Activated T-helper 1 cell treated with anti-CD3 and anti-CD28 coated beads, Interleukin-12 subunit alpha, Interleukin-12 subunit beta, Interleukin-2, Interleukin-4 antibody, amounts not matched to agents 30 ng/mL and 10 ng/mL and 1 ng/mL, durations not matched to agents 14 hours and 24 hours and 36 hours (primary cell): ENCODE measurements at regions of chr5 and their contacts with region 1.

Region 1: DNA sequence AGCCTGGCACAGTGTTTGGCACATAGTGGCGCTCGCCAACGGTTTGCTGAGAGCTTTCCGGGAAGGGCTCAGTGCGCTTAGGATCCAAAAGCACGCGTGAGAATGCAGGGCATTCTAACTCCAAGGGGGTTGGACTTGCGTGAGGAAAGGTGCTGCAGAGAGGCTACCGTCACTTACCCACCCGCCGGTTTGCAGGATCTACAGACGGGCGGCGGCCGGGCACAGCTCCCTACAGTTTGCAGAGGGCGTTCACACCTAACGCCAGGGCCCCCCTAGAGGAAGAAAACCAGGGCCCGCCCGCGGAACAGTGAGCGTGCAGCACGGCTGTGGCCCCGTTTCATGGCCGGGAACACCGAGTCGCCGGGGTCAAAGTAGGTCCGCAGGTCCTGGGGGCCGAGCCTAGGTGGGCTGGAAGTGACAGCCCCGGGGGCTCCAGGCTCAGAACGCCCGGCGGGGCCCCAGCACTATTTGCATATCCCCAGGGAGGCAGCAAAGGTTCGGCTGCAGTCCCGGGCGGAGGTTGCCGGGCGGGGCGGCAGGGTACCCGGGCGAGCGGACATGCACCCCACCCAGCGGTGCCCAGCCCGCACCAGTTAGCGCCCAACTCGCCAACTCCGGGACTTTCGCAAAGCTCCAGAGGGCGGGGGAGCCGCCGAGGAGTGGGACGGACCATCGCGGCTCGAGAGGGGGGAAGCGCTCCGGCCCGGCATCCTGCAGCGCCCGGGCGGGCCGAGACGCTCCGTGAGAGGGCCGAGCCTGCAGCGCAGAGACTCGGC is 526 bp upstream of the GALNT10 start:
- DNase-seq: peak; percentile 77
- H3K4me3 Mint-ChIP-seq: peak overlapping the region; percentile 87
- H3K27ac Mint-ChIP-seq: peak overlapping the region; percentile 85
- H3K4me1 Mint-ChIP-seq: peaks cover 54% of the 10 kb centered on the region
- H3K27me3 Mint-ChIP-seq: peaks cover 3% of the 10 kb centered on the region

Region 2: DNA sequence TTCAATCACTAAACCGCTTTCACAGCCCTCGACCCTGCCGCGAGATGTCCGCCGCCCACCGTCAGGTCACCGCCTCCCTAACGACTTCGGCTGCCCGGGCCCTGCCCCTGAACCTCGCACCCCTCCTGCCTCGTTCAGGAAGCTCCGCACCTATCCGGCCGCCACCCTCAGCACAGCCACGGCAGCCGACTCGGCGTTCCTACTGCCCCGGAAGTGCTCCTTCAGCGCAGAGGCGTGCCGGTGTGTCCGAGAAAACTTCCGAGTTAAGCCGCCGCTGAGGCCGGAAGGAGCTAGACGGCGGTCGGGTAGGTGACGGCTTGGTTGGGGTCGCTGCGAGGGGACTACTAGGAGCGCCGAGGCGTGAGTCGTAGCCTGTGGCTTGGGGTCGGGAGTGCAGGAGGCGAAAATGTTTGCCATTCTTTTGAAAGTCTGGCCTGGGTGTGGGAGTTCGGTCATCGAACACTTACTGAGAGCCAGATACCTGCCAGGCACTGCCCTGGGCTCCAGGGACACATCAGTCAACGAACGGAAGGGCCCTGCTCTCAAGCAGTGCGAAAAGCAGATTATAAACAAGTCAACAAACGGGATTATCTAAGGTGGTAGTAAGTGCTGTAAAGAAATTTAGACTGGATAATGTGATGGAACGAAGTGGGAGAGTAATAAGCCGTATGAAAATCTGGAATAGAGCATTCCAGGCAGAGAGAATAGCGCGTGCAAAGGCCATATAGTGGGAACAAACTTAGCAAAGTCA is 151.1 kb before region 1 on chr5 and contains the starts of genes FAM114A2 and MFAP3:
- intact Hi-C with region 1: loop called (anchors 1 kb)
- DNase-seq: peak; percentile 88
- H3K4me3 Mint-ChIP-seq: peak within 1 kb of the TSS; percentile 98
- H3K27ac Mint-ChIP-seq: peak within 1 kb of the TSS; percentile 94
- H3K4me1 Mint-ChIP-seq: peaks cover 50% of the 10 kb centered on the region
- H3K27me3 Mint-ChIP-seq: no peaks in the 10 kb centered on the region
- total RNA-seq, gene FAM114A2: 28.3 and 28.7 TPM in 2 replicates
- total RNA-seq, gene MFAP3: 24.3 and 29.9 TPM in 2 replicates

Region 3: GRCh38 chr5:154214371-154215106 is 24.5 kb after region 1 on chr5:
- intact Hi-C with region 1: loop called (anchors 1 kb)
- DNase-seq: peak; percentile 17
- H3K4me3 Mint-ChIP-seq: peak overlapping the region; percentile 68
- H3K27ac Mint-ChIP-seq: peak overlapping the region; percentile 91
- H3K4me1 Mint-ChIP-seq: peaks cover 77% of the 10 kb centered on the region
- H3K27me3 Mint-ChIP-seq: no peaks in the 10 kb centered on the region

Region 4: DNA sequence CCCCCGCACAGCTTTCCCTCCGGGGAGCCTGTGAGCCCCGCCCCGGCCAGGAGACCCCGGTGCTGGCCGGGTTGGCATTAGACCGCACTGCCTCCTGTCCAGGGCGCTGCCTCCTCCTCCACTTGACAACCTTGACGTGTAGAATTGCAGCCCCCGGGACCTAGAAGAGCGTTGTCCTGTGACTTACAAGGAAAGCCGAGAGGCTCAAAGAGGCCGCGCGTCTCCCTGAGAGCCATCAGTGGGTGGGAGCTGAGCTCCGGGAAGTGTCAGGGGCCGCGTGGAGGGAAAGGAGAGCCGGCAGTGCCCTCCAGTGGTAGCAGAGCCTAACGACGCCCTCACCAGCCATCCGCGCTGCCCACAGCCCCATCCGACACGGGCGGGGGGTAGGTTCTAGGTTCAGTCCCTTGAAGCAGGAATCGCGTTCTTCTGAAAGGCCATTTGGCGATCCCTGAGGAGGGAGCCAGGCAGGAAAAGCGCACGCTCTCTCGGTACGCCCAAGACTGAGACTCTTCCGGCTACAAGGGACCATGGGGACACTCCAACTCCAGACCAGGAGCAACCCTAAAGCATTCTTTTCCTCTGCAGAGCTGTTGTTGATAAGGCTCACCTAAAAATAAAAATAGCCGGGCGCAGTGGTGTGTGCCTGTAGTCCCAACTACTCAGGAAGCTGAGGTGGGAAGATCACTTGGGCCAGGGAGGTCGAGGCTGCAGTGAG is 215.2 kb after region 1 on chr5:
- intact Hi-C with region 1: loop called (anchors 2 kb)
- DNase-seq: peak; percentile 50
- H3K4me3 Mint-ChIP-seq: peak overlapping the region; percentile 26
- H3K27ac Mint-ChIP-seq: peak overlapping the region; percentile 40
- H3K4me1 Mint-ChIP-seq: peaks cover 7% of the 10 kb centered on the region
- H3K27me3 Mint-ChIP-seq: no peaks in the 10 kb centered on the region

Region 5: GRCh38 chr5:154940772-154941620 is 751.0 kb after region 1 on chr5 and contains the start of gene MRPL22:
- intact Hi-C with region 1: loop called (anchors 10 kb)
- DNase-seq: peak; percentile 93
- H3K4me3 Mint-ChIP-seq: peak within 1 kb of the TSS; percentile 94
- H3K27ac Mint-ChIP-seq: peak within 1 kb of the TSS; percentile 93
- H3K4me1 Mint-ChIP-seq: peaks cover 18% of the 10 kb centered on the region
- H3K27me3 Mint-ChIP-seq: peaks cover 3% of the 10 kb centered on the region
- total RNA-seq, gene MRPL22: 73.1 and 78.1 TPM in 2 replicates

Region 6: GRCh38 chr5:156147251-156147947 is 1957.4 kb after region 1 on chr5:
- intact Hi-C with region 1: no loop called
- DNase-seq: no peak
- H3K4me3 Mint-ChIP-seq: no peak overlapping the region
- H3K27ac Mint-ChIP-seq: no peak overlapping the region
- H3K4me1 Mint-ChIP-seq: no peaks in the 10 kb centered on the region
- H3K27me3 Mint-ChIP-seq: no peaks in the 10 kb centered on the region